IMR-90 (cell line): ENCODE measurements at regions of chrX and their contacts with region 1.

Region 1: DNA sequence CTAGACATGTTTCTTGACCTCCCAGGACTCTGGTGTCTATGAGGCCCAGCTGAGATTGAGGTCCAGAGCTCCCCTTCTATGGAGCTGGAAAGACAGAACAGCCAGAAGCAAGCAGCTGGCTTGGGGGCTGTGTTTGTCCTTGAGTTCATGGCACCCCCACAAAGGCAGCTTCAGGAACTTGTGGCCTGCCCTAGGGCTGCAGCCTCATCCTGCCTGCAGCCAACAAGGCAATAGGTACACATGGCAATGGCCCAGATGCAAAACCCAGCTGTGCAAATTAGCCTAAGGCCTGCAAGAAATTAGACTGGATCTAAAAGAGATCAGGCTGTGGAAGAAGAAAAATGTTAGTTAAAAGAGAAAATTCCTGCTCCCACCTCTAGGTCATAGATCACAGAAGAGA is 131.7 kb upstream of the NALF2 start:
- DNase-seq: no peak
- ATAC-seq: no peak
- H3K4me3 ChIP-seq: no peak overlapping the region
- H3K27ac ChIP-seq: no peak overlapping the region
- H3K4me1 ChIP-seq: no peaks in the 10 kb centered on the region
- H3K27me3 ChIP-seq: peaks cover 10% of the 10 kb centered on the region
- CTCF ChIP-seq: no peak
- POLR2A ChIP-seq: no peak
- RAD21 ChIP-seq: no peak

Region 2: DNA sequence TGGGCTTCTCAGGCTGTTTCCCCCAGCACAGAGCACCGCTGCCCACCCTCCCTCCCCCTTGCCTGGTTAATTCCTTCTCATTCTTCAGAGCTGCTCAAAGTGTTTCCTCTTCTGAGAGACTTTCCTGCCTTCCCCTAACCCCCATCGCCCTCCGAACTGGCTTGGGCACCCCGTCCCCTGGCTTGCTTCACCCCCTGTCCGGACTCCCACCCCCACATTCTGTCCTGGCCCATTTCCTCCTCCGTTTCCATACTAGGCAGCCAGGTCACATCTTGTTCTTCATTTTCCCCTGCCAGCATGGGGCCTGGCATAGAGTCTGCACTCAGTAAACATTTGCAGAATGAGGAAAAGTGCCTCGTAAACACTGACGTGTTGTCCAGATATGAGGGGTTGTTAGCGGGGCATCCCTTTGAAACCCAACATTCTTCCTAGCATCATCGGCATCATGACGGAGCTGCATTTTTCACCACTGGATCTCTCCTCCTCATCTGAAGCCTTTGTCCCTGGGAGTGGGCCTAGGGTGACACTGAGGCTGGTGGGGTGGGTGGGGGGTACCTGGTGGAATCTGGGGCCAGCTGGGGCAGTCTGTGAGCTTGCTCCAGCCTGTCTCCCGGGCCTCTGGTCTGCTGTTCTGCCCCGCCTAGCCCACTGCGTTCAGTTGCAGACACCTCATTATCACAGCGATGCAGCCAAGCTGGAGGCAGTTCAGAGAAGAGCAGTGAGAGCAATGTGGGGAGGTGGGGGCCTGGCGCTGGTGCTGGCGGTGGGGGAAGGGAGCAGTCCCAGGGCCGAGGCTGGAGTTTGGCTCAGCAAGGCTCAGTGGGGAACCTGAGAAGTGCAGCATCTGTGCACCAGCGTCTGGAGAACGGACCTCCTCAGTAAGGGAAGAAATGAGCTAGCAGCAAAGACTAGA is 57.7 kb before region 1 on chrX:
- CTCF ChIA-PET with region 1: interaction called, 14 read pairs
- POLR2A ChIA-PET with region 1: no interaction called
- dilution Hi-C with region 1: no loop called
- in situ Hi-C with region 1: no loop called
- intact Hi-C with region 1: no loop called
- DNase-seq: no peak
- ATAC-seq: no peak
- H3K4me3 ChIP-seq: no peak overlapping the region
- H3K27ac ChIP-seq: no peak overlapping the region
- H3K4me1 ChIP-seq: no peaks in the 10 kb centered on the region
- H3K27me3 ChIP-seq: peaks cover 53% of the 10 kb centered on the region
- CTCF ChIP-seq: no peak
- POLR2A ChIP-seq: no peak
- RAD21 ChIP-seq: no peak

Region 3: GRCh38 chrX:69510137-69510715 is 137.8 kb after region 1 on chrX:
- CTCF ChIA-PET with region 1: no interaction called
- POLR2A ChIA-PET with region 1: no interaction called
- dilution Hi-C with region 1: no loop called
- in situ Hi-C with region 1: no loop called
- intact Hi-C with region 1: no loop called
- DNase-seq: no peak
- ATAC-seq: no peak
- H3K4me3 ChIP-seq: no peak overlapping the region
- H3K27ac ChIP-seq: no peak overlapping the region
- H3K4me1 ChIP-seq: no peaks in the 10 kb centered on the region
- H3K27me3 ChIP-seq: peaks cover 29% of the 10 kb centered on the region
- CTCF ChIP-seq: no peak
- POLR2A ChIP-seq: no peak
- RAD21 ChIP-seq: no peak